A673 (cell line): ENCODE measurements at regions of chr14 and their contacts with region 1.

Region 1: DNA sequence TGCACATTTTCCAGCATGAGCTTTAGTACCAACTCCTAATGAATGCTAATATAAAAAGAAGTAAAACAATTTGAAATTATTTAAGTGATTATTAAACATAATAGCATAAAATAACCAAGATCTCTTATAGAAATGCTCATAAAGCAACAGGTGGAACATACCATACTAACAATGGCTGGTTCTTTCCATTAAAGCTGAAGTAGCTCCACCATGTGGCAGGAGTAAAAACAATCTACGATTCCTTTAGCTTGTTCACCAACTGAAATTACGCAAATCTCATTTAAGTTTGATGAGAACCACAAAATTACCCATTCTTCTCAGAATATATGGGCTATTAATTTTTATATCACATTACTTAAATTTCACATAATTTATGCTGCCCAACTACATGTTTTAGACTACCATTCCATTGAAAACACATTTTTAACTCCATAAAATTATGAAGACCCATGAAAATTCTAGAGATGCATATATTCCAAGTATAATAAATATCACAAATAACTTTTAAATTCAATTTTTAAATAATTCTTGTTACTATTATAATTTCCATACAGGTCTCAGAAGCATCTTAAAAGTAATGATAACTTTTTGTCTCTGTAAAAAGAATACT is 213.6 kb downstream of the DAD1 start:
- DNase-seq: peak; percentile 78
- H3K4me3 ChIP-seq: no peak overlapping the region
- H3K27ac ChIP-seq: no peak overlapping the region
- H3K4me1 ChIP-seq: no peaks in the 10 kb centered on the region
- H3K27me3 ChIP-seq: no peaks in the 10 kb centered on the region
- CTCF ChIP-seq: peak; percentile 86

Region 2: GRCh38 chr14:21833836-21834235 is 541.6 kb before region 1 on chr14:
- CTCF ChIA-PET with region 1: no interaction called
- POLR2A ChIA-PET with region 1: no interaction called
- intact Hi-C with region 1: no loop called
- DNase-seq: no peak
- H3K4me3 ChIP-seq: no peak overlapping the region
- H3K27ac ChIP-seq: no peak overlapping the region
- H3K4me1 ChIP-seq: no peaks in the 10 kb centered on the region
- H3K27me3 ChIP-seq: no peaks in the 10 kb centered on the region
- CTCF ChIP-seq: no peak

Region 3: DNA sequence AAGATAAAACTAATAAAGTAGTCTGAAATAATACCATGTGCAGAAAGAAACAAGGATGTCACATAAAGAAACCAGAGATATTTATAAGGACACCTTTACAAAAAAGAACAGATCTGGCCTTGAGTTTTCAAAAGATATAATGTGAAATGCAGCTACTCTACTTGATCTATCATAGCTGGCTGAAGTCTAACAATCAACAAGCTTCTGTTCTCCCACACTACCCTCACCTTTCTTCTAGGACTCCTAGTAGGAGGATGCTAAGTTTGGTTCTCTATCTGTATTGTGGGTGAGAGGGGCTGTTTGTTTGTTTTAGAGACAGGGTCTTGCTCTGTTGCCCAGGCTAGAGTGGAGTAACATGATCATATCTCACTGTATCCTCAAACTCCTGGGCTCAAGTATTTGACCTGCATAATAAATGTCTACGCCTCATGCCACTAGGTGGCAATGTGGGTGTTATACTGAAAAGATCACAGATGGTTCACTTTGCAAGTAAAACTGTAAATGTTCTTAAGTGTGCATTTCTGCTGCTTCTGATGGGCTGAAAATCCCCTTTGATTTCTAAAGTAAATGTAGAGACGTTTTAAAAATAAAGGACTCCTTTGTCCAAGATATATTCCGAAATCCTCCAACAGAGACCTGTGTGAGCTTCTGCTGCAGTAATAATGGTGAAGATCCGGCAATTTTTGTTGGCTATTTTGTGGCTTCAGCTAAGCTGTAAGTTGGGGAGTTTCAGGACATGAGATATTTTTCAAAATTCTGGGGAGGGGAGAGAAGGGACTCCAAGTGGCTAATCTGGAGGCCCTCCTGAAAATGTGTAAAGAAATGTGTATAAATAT is 55.7 kb before region 1 on chr14:
- CTCF ChIA-PET with region 1: interaction called, 25 read pairs
- POLR2A ChIA-PET with region 1: no interaction called
- intact Hi-C with region 1: loop called (anchors 1 kb)
- DNase-seq: peak; percentile 81
- H3K4me3 ChIP-seq: no peak overlapping the region
- H3K27ac ChIP-seq: no peak overlapping the region
- H3K4me1 ChIP-seq: no peaks in the 10 kb centered on the region
- H3K27me3 ChIP-seq: no peaks in the 10 kb centered on the region
- CTCF ChIP-seq: peak; percentile 86